Left ventricle myocardium inferior (tissue), 1 donor: ENCODE measurements at regions of chr17 and their contacts with region 1.

Region 1: GRCh38 chr17:57997085-57997809 is 9.2 kb upstream of the VEZF1 start:
- DNase-seq: no peak
- H3K4me3 ChIP-seq: no peak overlapping the region
- H3K27ac ChIP-seq: no peak overlapping the region
- H3K4me1 ChIP-seq: peaks cover 60% of the 10 kb centered on the region
- H3K27me3 ChIP-seq: no peaks in the 10 kb centered on the region
- CTCF ChIP-seq: no peak

Region 2: DNA sequence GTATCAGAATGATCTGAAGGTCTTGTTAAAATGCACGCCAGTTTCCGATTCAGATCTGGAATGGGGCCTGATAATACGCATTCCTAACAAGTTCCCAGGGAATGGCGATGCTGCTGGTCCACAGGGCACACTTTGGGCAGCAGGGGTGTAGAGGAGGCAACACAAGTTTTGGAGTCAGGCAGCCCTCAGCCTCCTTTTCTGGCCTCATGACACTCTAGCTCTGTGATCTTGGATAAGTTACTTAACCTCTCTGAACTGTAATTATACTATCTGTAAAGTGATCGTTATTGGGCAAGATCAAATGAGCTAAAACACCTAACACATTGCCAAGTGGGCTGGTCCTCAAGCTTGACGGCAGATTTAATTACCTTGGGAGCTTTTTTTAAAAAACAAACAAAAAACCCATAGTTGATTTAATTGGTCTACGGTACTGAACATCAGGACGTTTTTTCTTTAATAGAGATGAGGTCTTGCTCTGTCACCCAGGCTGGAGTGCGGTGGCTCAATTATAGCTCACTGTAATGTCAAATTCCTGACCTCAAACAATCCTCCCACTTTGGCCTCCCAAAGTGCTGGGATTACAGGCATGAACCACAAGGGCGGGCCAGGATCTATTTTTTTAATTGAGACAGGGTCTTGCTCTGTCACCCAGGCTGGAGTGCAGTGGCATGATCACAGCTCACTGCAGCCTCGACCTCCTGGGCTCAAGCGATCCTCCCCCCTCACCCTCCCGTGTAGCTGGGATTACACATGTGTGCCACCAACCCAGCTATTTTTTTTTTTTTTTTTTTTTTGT is 137.4 kb before region 1 on chr17:
- intact Hi-C with region 1: loop called (anchors 2 kb)
- DNase-seq: no peak
- H3K4me3 ChIP-seq: no peak overlapping the region
- H3K27ac ChIP-seq: peak overlapping the region; percentile 81
- H3K4me1 ChIP-seq: peaks cover 60% of the 10 kb centered on the region
- H3K27me3 ChIP-seq: no peaks in the 10 kb centered on the region
- CTCF ChIP-seq: no peak

Region 3: DNA sequence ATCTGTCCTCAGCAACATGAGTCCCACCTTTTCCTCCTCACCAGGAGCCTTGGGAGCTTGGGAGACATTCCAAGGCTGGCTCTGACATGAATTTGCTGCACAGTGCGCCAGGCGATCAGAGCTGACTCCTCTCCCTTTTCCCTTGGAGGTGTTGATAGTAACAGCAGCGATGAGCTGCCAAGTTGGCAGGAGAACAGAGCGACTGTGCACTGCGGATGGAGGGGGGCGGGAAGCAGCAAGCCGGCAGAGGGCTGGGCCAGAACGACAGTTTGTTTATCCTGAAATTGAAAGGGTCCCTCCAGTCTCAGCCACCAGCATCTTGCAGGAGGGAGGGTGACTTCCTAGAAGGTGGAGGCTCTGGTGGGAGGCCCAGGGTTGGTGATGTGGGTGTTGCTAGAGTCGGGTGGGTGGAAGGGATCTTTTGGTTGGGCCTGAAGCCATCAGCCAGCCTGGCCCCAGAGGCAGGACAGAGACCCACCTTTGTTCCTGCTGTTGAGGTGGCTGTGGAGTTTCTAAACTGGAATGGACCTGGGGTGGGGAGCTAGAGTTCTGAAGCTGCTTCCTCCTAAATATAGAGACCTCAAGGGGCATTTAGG is 63.4 kb after region 1 on chr17:
- intact Hi-C with region 1: no loop called
- DNase-seq: peak; percentile 72
- H3K4me3 ChIP-seq: no peak overlapping the region
- H3K27ac ChIP-seq: peak overlapping the region; percentile 22
- H3K4me1 ChIP-seq: peaks cover 28% of the 10 kb centered on the region
- H3K27me3 ChIP-seq: no peaks in the 10 kb centered on the region
- CTCF ChIP-seq: no peak